ENCODE measurements at regions of chr22 and their contacts with region 1.

Region 1: DNA sequence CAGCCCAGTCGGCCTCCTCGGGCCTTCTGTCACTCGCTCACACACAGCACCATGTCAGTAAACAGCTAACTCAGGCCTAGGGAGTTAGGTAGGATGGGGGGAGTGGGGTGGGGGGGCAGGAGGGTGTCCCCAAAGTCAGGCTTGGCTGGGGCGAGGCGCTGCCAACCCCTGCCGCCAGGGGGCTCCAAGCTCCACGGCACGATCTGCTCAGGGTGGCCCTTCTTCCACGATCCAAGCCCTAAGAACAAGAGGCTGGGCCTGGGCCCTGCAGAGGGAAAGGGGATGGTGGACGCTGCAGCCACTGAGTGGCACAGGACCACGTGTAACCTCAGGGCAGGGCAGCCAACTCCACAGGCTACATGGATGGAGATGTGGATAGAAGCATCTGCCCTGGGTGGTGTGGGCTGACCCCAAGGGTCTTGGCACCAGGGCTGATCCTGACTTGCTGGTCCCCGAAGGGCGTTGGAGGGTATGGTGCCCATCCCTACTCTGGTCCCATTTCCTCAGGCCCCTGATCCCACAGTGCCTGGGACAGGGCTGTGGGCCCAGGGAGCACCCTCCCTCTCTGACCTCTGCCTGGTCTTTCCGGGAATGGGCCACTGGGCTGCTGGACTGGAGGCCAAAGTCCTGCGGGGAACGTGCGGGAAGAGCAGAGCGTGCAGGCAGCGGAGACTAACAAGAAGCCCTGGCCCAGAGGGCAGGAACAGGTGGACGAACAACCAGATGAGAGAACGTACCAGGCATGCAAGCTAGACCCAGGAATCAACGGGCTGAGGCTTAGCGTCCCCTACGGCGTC is 29.1 kb upstream of the TXNRD2 start:
- DNase-seq: peak; percentile 91
- CTCF ChIP-seq: peak; percentile 93

Region 2: GRCh38 chr22:20128902-20129746 is 158.4 kb after region 1 on chr22:
- in situ Hi-C with region 1: loop called (anchors 10 kb)
- DNase-seq: no peak
- CTCF ChIP-seq: peak; percentile 49